HepG2 (cell line): ENCODE measurements at regions of chr12 and their contacts with region 1.

Region 1: GRCh38 chr12:121773011-121773777 is 20.3 kb downstream of the RHOF start:
- DNase-seq: peak; percentile 61
- ATAC-seq: peak; percentile 62
- H3K4me3 ChIP-seq: no peak overlapping the region
- H3K27ac ChIP-seq: no peak overlapping the region
- H3K4me1 ChIP-seq: peaks cover 35% of the 10 kb centered on the region
- H3K27me3 ChIP-seq: no peaks in the 10 kb centered on the region
- CTCF ChIP-seq: peak; percentile 97
- EP300 ChIP-seq: no peak
- POLR2A ChIP-seq: no peak
- RAD21 ChIP-seq: peak; percentile 95

Region 2: DNA sequence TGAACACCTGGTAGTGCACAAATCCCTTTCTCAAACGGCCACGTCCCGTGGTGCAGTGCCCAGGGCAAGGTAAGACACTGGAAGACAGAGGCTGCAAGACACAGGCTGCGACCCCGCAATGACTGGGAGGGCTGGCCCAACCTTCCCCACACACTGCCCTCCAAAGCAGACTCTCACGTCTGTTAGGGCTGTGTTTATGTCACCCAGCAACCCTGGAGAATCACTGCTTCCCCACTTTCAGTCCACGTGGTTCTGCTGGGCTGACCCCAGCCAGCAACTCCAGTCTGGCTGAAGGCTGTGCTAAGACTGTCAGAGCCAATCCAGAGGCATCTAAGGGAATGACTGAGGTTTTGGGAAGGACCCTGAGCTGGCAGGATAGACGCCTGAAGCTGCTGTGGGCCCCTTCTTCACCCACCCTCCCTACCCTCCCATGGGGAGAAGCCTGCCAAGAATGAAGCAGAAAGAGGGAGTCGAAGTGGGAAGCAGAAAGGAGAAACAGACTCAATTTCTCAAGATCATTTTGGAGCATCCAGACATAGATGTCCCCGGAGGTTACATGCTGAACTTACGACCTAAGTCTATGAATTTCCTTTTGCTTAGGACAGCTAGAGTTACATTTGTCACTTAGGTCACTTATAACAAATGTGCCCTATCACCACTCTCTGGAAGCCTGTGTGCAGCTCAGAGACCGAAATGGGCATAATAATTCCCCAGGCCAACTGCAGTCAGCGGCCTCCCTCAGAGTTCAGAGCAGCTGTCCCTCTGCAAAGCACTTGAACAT is 204.0 kb before region 1 on chr12:
- CTCF ChIA-PET with region 1: no interaction called
- POLR2A ChIA-PET with region 1: no interaction called
- in situ Hi-C with region 1: no loop called
- intact Hi-C with region 1: no loop called
- DNase-seq: no peak
- ATAC-seq: no peak
- H3K4me3 ChIP-seq: no peak overlapping the region
- H3K27ac ChIP-seq: no peak overlapping the region
- H3K4me1 ChIP-seq: no peaks in the 10 kb centered on the region
- H3K27me3 ChIP-seq: no peaks in the 10 kb centered on the region
- CTCF ChIP-seq: no peak
- EP300 ChIP-seq: no peak
- POLR2A ChIP-seq: no peak
- RAD21 ChIP-seq: no peak

Region 3: DNA sequence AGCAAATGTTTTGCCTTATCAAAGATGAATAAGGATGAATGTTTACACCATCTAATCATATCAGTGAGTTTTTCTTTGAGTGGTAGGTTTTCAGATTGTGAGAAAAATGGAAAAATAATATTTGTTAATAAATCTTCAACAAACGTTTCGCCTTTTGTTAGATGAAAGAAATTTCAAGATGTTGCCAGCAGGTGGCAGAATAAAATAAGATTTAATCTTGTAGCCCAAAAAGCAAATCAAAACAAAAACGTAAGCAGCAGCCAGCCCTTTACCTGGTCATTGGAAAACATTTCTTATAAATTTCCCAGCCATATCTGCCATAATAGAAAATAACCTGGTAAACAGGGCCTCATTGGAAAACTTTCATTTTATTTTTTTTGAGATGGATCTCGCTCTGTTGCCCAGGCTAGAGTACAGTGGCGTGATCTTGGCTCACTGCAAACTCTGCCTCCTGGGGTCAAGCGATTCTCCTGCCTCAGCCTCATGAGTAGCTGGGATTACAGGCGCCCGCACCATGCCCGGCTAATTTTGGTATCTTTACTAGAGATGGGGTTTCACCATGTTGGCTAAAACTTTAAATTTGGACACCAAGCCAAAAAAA is 76.0 kb before region 1 on chr12:
- CTCF ChIA-PET with region 1: interaction called, 69 read pairs
- POLR2A ChIA-PET with region 1: interaction called, 3 read pairs
- in situ Hi-C with region 1: loop called (anchors 5 kb)
- intact Hi-C with region 1: loop called (anchors 1 kb)
- DNase-seq: peak; percentile 53
- ATAC-seq: no peak
- H3K4me3 ChIP-seq: no peak overlapping the region
- H3K27ac ChIP-seq: no peak overlapping the region
- H3K4me1 ChIP-seq: no peaks in the 10 kb centered on the region
- H3K27me3 ChIP-seq: peaks cover 0 to 8% of the 10 kb centered on the region in 2 experiments; a peak in 1 of 5 replicates
- CTCF ChIP-seq: peak; percentile 65
- EP300 ChIP-seq: no peak
- POLR2A ChIP-seq: no peak
- RAD21 ChIP-seq: peak; percentile 64

Region 4: GRCh38 chr12:121712461-121713256 is 60.5 kb before region 1 on chr12 and contains the start of gene TMEM120B:
- CTCF ChIA-PET with region 1: no interaction called
- POLR2A ChIA-PET with region 1: interaction called, 3 read pairs
- in situ Hi-C with region 1: no loop called
- intact Hi-C with region 1: loop called (anchors 5 kb)
- DNase-seq: peak; percentile 37
- ATAC-seq: peak; percentile 73
- H3K4me3 ChIP-seq: peak within 1 kb of the TSS; percentile 60 to 97 (median 91)
- H3K27ac ChIP-seq: peak within 1 kb of the TSS; percentile 77
- H3K4me1 ChIP-seq: peaks cover 80% of the 10 kb centered on the region
- H3K27me3 ChIP-seq: no peaks in the 10 kb centered on the region; a peak in 1 of 5 replicates
- CTCF ChIP-seq: peak; percentile 15; the same call in 1 of the 2 replicates
- EP300 ChIP-seq: no peak
- POLR2A ChIP-seq: peak; percentile 78 to 88
- RAD21 ChIP-seq: peak; percentile 39; the same call in 1 of the 2 replicates
- total RNA-seq, gene TMEM120B: 3.8 and 7.1 TPM in 2 replicates

Region 5: GRCh38 chr12:121811434-121812319 is 38.5 kb after region 1 on chr12:
- CTCF ChIA-PET with region 1: interaction called, 19 read pairs
- POLR2A ChIA-PET with region 1: no interaction called
- in situ Hi-C with region 1: no loop called
- intact Hi-C with region 1: no loop called
- DNase-seq: peak; percentile 57
- ATAC-seq: peak; percentile 91
- H3K4me3 ChIP-seq: peak overlapping the region; percentile 62 to 71 (median 63)
- H3K27ac ChIP-seq: peak overlapping the region; percentile 57
- H3K4me1 ChIP-seq: peaks cover 38% of the 10 kb centered on the region
- H3K27me3 ChIP-seq: no peaks in the 10 kb centered on the region
- CTCF ChIP-seq: peak; percentile 70
- EP300 ChIP-seq: 0 out of 4 replicates have a peak, but pooled peaks of 1 of the 2 experiments have one; percentile 5
- POLR2A ChIP-seq: no peak
- RAD21 ChIP-seq: peak; percentile 98

Region 6: DNA sequence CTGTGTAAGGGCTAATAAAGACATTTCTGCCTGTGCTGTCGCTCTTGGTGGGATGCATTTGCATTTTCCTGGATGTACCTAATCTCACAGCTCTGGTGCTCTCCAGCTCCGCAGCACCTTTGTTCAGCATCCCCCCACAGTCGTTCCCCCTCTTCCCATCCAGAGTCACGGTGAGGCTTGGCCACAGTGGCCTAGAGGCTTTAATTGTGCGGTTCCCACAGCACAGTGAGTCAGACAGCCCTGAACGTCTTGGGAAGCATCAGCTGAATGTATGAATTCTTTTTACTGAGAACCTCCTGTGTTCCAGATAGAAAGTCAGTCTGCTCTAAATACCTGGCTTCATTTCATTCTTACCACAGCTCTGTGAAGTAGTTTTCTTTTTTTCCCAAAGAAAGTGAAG is 334.1 kb after region 1 on chr12:
- CTCF ChIA-PET with region 1: no interaction called
- POLR2A ChIA-PET with region 1: no interaction called
- in situ Hi-C with region 1: no loop called
- intact Hi-C with region 1: no loop called
- DNase-seq: no peak
- ATAC-seq: no peak
- H3K4me3 ChIP-seq: no peak overlapping the region
- H3K27ac ChIP-seq: no peak overlapping the region
- H3K4me1 ChIP-seq: peaks cover 31% of the 10 kb centered on the region
- H3K27me3 ChIP-seq: no peaks in the 10 kb centered on the region
- CTCF ChIP-seq: no peak
- EP300 ChIP-seq: no peak
- POLR2A ChIP-seq: no peak
- RAD21 ChIP-seq: no peak